GM10248 (cell line): ENCODE measurements at regions of chr1 and their contacts with region 1.

Region 1: DNA sequence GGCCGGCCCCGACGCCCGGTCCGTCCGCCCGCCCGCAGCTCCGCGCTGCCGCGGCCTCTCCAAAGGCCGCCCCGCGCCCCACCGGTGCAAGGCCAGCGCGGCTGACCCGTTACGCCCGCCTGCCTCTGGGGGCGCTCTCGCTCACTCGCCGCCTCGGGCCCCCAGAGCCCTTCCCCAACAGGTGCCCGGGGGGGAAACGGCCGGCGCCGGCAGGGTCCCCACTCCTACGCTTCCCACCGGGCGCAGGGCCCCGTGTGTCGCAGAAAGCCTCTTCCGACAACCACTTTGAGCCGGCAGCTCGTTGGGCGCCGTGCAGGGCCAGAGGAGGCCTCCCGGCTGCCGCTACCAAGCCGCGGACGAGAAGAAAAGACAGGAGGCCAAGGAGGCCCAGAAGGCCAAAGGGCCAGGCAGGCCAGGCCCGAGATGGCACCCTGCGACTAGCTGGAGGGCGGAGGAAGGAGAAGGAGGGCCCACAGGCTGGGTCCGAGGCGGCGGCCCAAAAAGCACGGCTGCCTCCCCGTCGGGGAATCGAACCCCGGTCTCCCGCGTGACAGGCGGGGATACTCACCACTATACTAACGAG is 64.9 kb upstream of the FCGR2A start:
- DNase-seq: peak; percentile 85
- CTCF ChIP-seq: peak; percentile 91

Region 2: DNA sequence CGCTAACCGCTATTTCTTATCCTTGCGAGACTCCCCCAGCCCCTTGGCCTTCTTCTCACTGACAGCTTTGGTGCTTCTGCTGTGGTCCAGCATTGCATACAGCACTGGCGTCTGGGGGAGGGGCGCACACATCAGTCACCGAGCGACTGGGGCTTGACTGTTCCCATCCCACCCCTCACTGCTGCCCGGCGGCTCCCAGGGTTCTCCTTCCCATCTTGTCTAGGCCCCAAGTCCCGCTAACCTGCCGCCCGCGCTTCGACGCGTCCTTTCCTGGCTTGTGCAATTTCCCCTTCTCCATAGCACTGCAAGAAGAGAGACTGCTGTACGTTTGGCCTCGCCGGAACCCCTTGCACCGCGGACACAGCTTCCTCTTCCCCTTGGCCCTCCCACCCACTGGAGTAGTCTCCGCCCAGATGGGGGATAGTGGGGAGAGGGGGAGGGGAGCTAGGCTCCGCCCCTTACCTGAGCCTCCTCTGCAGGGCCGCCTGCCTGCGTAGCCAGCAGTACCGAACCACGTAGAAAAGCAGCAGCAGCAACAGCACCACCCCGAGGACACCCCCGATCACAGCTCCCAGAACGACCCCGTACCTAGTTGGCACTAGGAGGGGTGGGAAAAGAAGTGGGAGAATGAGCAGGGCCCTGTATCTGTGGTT is 134.4 kb before region 1 on chr1:
- CTCF ChIA-PET with region 1: no interaction called
- POLR2A ChIA-PET with region 1: no interaction called
- DNase-seq: peak; percentile 89
- CTCF ChIP-seq: peak; percentile 46

Region 3: GRCh38 chr1:161399257-161399998 is 41.0 kb before region 1 on chr1:
- CTCF ChIA-PET with region 1: interaction called, 12 read pairs
- POLR2A ChIA-PET with region 1: no interaction called
- DNase-seq: peak; percentile 85
- CTCF ChIP-seq: peak; percentile 22

Region 4: DNA sequence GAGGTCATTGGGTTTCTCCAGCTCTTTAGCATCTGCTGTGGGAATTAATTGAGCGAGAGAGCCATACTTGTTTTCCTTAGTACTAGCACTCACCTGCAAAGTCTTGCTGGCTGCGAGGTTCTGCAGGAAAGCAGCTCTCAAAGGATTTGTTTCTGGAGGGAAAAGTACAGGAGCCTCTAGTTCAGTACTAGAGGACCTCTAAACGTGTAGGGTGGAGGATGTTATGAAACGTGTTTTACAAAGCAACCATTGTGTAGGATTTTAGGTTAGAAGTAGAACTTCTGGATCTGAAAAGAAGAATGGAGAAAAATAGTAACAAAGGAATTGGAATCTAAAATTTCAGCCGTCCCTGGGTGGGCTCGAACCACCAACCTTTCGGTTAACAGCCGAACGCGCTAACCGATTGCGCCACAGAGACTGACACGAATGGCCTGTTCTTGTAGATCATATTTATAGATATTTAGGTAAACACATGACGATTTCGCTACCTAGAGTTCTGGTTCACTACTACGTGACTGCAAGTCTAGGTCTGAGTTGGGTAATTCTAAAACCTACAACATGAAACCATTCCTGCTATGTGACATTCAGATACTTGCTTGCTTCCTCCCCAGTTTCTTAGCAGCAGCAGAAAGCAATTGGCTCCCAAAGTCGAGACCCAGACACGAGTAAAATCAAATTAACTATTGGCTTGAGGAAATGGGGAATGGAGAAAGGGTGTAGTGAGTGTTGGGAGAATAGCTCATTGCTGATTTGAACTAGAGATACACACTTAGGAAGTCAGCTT is 12.5 kb before region 1 on chr1:
- CTCF ChIA-PET with region 1: interaction called, 41 read pairs
- POLR2A ChIA-PET with region 1: no interaction called
- DNase-seq: peak; percentile 36
- CTCF ChIP-seq: no peak